ENCODE measurements at regions of chr1 and their contacts with region 1.

Region 1: GRCh38 chr1:189803364-189803763 is 674.3 kb downstream of the BRINP3 start:
- DNase-seq: no peak

Region 2: DNA sequence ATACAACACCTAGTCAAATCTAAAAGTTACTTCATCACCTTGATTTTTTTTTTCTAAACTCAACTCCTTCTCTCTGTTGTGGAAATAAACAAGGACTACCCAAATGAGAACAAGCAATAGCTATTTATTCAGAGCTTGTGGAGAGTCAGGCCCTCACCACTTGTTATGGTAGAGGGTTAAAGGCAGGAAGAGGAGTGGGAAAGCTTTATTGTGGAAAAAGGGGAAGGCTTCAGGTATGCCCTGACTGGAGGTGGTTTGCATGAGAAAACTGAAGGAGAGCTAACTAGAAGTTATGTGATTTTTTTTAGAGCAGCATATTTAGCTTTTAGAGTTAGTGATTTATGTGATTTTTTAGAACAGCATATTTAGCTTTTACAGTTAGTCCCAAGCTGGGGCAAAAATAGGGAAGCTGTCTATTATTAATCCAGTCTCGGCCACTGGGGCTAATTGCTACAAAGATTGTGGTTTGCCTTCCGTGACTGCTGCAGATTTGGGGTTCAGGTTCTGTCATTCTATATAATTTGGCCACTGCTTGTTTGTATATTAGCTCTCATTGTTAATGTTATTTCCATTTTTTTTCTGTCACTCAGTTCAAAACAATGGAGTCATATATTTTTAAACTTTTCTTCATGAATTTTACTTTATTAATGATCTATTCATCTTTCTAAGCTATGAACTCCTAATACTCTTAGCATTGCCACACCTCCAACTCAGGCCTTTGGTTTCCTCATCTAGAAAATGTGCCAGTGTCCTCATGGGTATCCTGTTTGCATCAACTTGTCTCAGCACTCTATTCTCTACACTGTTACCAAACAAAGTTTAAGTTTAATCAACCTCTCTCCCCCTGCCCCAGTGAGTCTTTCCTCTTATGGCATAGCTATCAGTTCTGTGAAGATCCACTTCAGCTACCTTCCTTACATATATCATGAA is 38.7 kb before region 1 on chr1:
- intact Hi-C with region 1: no loop called
- DNase-seq: no peak

Region 3: GRCh38 chr1:189783456-189783855 is 19.9 kb before region 1 on chr1:
- intact Hi-C with region 1: loop called in 1 of 2 experiments (anchors 1 kb)
- DNase-seq: no peak